ENCODE measurements at regions of chr15 and their contacts with region 1.

Region 1: DNA sequence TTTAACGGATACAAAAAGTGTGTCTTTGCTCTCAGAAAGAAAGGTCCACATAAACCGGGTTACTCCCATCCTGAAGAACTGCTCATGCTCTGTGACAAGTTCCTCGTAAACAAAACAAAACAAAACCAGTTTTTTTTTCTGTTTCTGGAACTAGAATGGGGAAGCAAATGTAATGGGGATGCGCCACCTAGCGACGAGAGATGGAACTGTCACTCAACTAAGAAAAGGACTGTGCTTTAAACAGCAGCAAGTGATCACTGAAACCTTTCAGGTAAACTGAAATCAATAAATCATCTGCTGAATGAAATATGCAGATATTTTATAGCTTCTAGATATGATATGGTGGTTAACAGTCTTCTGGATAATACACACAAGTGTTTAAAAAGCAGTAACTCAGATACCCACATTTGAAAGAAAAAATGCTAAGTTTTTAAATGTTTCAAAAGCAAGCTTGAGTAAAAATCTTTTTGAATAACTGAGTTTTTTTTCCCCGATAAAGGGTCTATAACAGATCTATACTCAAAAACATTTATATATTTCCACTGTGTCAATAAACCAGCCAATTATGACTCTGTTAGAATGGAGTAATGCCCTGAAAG is 10.9 kb downstream of the TM2D3 start:
- DNase-seq: peak; percentile 79

Region 2: GRCh38 chr15:101294731-101295606 is 346.3 kb before region 1 on chr15 and contains the start of gene SNRPA1:
- CTCF ChIA-PET with region 1: interaction called, 6 read pairs
- POLR2A ChIA-PET with region 1: interaction called, 15 read pairs
- DNase-seq: peak; percentile 98

Region 3: GRCh38 chr15:101615986-101616848 is 25.0 kb before region 1 on chr15:
- CTCF ChIA-PET with region 1: interaction called, 33 read pairs
- POLR2A ChIA-PET with region 1: interaction called, 4 read pairs
- DNase-seq: peak; percentile 85

Region 4: DNA sequence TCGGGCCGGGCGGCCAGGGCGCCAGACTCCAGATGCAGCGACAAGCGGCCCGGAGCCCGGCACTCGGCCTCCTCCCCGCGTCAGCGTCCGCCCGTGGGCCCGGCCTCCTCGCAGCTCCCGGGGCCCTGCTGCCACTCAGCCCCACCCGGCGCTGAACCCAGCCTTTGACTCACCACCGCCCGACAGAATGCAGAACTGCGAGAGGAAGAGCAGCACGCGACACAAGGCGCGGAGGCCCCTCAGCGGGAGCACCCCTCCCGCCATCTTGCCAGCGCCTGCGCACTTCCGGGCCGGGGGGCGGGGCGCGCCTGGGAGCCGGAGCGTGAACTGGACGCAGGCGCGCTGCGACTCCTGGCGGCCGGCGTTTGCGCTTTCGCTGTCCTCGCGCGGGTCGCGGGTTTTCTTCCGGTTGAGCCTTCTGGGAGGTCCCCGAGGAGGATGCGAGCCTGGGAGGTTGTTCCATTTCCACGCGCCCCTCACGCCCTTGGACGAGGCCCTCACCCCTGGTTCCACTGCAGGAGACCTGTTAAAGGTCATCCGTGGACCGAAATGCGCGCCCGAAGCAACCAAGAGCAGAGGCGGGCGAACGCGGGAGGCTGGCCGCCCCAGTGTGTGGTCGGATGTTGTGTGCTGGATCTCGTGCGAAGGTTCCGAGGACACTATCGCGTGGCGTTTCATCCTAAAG is 11.0 kb after region 1 on chr15 and contains the start of gene TM2D3:
- CTCF ChIA-PET with region 1: interaction called, 9 read pairs
- POLR2A ChIA-PET with region 1: interaction called, 11 read pairs
- DNase-seq: peak; percentile 100

Region 5: GRCh38 chr15:101795455-101795854 is 154.2 kb after region 1 on chr15:
- CTCF ChIA-PET with region 1: no interaction called
- POLR2A ChIA-PET with region 1: no interaction called
- DNase-seq: no peak